ENCODE measurements at regions of chr1 and their contacts with region 1.

Region 1: GRCh38 chr1:171644805-171645483 is 7.5 kb downstream of the MYOC start:
- DNase-seq: peak; percentile 87
- ATAC-seq: peak; percentile 94
- H3K4me3 ChIP-seq: peak overlapping the region; percentile 12 to 73 (median 49); a peak in 5 of 6 replicates
- H3K27ac ChIP-seq: no peak overlapping the region
- H3K4me1 ChIP-seq: peaks cover 8% of the 10 kb centered on the region; the same call in 1 of the 2 replicates
- H3K27me3 ChIP-seq: no peaks in the 10 kb centered on the region
- CTCF ChIP-seq: peak; percentile 94
- EP300 ChIP-seq: no peak
- POLR2A ChIP-seq: no peak
- RAD21 ChIP-seq: peak; percentile 85

Region 2: GRCh38 chr1:171715813-171716251 is 70.9 kb after region 1 on chr1:
- CTCF ChIA-PET with region 1: interaction called, 18 read pairs
- POLR2A ChIA-PET with region 1: no interaction called
- in situ Hi-C with region 1: loop called (anchors 10 kb)
- intact Hi-C with region 1: loop called (anchors 1 kb)
- DNase-seq: peak; percentile 10
- ATAC-seq: no peak
- H3K4me3 ChIP-seq: no peak overlapping the region
- H3K27ac ChIP-seq: no peak overlapping the region
- H3K4me1 ChIP-seq: no peaks in the 10 kb centered on the region
- H3K27me3 ChIP-seq: no peaks in the 10 kb centered on the region
- CTCF ChIP-seq: peak; percentile 23; the same call in 1 of the 2 replicates
- EP300 ChIP-seq: no peak
- POLR2A ChIP-seq: no peak
- RAD21 ChIP-seq: no peak

Region 3: DNA sequence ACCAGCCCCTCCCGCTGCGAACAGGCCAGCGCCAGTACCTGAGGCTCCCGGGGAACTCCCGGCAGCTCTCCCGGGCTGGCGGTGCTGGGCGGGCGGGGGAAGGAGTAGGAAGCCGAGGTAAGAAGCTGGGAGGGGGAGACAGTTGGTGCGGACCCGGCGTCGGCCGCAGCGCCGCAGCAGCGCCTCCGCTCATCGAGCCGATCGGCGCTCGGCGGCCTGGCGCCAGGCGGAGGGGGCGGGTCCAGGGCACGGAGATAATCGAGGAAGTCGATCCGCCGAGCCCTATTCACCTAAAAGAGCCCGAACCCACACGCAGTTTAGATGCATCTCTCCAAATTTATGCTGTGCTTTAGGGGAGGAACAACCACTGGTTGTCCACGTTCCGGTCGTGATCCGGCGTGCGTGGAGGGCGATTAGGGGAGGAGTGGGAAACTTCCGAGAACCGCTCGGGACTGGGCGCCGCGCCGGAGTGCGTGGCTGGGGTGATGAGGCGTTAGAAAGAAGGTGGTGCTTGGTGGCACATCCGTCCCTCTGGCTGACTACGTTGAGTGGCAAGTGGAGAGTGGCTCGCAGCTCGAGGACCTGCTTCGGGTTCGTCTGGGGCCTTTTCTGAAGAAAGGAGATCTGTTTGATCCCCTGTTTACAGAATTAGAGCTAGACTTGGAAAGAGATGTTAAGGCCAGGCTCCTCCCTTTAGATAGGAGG is 97.1 kb after region 1 on chr1 and contains the start of gene VAMP4:
- CTCF ChIA-PET with region 1: interaction called, 3 read pairs
- POLR2A ChIA-PET with region 1: interaction called, 4 read pairs
- in situ Hi-C with region 1: no loop called
- intact Hi-C with region 1: loop called (anchors 1 kb)
- DNase-seq: peak; percentile 54
- ATAC-seq: peak; percentile 92
- H3K4me3 ChIP-seq: peak within 1 kb of the TSS; percentile 78 to 88 (median 86)
- H3K27ac ChIP-seq: peak within 1 kb of the TSS; percentile 72
- H3K4me1 ChIP-seq: peaks cover 23% of the 10 kb centered on the region
- H3K27me3 ChIP-seq: no peaks in the 10 kb centered on the region
- CTCF ChIP-seq: no peak
- EP300 ChIP-seq: peak in 1 of 2 experiments; percentile 28; a peak in 1 of 4 replicates
- POLR2A ChIP-seq: peak; percentile 75 to 78
- RAD21 ChIP-seq: no peak
- total RNA-seq, gene VAMP4: 1.4 and 1.6 TPM in 2 replicates

Region 4: GRCh38 chr1:171781176-171781875 is 136.4 kb after region 1 on chr1 and contains the start of gene METTL13:
- CTCF ChIA-PET with region 1: no interaction called
- POLR2A ChIA-PET with region 1: no interaction called
- in situ Hi-C with region 1: no loop called
- intact Hi-C with region 1: loop called (anchors 10 kb)
- DNase-seq: peak; percentile 97
- ATAC-seq: peak; percentile 99
- H3K4me3 ChIP-seq: peak within 1 kb of the TSS; percentile 82 to 83 (median 82)
- H3K27ac ChIP-seq: peak within 1 kb of the TSS; percentile 85
- H3K4me1 ChIP-seq: peaks cover 35% of the 10 kb centered on the region
- H3K27me3 ChIP-seq: no peaks in the 10 kb centered on the region; a peak in 1 of 5 replicates
- CTCF ChIP-seq: peak; percentile 24; the same call in 1 of the 2 replicates
- EP300 ChIP-seq: no peak
- POLR2A ChIP-seq: peak; percentile 67 to 73
- RAD21 ChIP-seq: no peak
- total RNA-seq, gene METTL13: 22.8 and 28.3 TPM in 2 replicates

Region 5: GRCh38 chr1:171984850-171985485 is 340.0 kb after region 1 on chr1:
- CTCF ChIA-PET with region 1: no interaction called
- POLR2A ChIA-PET with region 1: no interaction called
- in situ Hi-C with region 1: loop called (anchors 10 kb)
- intact Hi-C with region 1: loop called (anchors 2 kb)
- DNase-seq: peak; percentile 40
- ATAC-seq: peak; percentile 75
- H3K4me3 ChIP-seq: no peak overlapping the region
- H3K27ac ChIP-seq: no peak overlapping the region
- H3K4me1 ChIP-seq: no peaks in the 10 kb centered on the region
- H3K27me3 ChIP-seq: no peaks in the 10 kb centered on the region
- CTCF ChIP-seq: peak; percentile 76
- EP300 ChIP-seq: no peak
- POLR2A ChIP-seq: no peak
- RAD21 ChIP-seq: peak; percentile 23; the same call in 1 of the 2 replicates

Measured in HepG2 (cell line).